AG04449 (cell line): ENCODE measurements at regions of chr17 and their contacts with region 1.

Region 1: DNA sequence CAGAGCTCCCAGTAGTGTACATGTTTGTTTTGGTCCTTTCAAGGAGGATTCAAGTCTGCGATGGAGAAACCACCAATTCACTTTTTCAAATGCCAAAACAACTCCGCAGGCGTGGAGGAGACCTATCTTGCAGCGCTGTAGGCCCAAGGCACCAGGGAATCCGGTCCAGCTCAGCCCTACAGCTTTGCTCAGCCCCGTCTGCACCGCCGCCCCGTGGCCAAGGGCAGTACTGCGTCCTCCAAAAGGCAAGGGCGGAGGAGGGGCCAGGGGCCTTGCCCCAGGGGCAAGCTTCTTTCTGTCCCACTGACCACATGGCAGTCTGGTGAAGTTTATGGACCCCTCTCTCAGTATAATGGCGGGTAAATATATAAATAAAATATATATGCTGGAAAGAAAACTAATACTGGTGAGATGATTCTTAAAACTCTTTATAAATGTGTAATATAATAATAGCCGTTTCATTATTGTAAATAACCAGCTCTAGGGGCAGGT is 709 bp upstream of the CD300LG start:
- DNase-seq: peak; percentile 3
- H3K4me3 ChIP-seq: no peak overlapping the region
- CTCF ChIP-seq: peak; percentile 100

Region 2: GRCh38 chr17:43760254-43760852 is 85.9 kb before region 1 on chr17:
- CTCF ChIA-PET with region 1: interaction called, 35 read pairs
- POLR2A ChIA-PET with region 1: no interaction called
- DNase-seq: peak; percentile 65
- H3K4me3 ChIP-seq: no peak overlapping the region
- CTCF ChIP-seq: peak; percentile 94

Region 3: DNA sequence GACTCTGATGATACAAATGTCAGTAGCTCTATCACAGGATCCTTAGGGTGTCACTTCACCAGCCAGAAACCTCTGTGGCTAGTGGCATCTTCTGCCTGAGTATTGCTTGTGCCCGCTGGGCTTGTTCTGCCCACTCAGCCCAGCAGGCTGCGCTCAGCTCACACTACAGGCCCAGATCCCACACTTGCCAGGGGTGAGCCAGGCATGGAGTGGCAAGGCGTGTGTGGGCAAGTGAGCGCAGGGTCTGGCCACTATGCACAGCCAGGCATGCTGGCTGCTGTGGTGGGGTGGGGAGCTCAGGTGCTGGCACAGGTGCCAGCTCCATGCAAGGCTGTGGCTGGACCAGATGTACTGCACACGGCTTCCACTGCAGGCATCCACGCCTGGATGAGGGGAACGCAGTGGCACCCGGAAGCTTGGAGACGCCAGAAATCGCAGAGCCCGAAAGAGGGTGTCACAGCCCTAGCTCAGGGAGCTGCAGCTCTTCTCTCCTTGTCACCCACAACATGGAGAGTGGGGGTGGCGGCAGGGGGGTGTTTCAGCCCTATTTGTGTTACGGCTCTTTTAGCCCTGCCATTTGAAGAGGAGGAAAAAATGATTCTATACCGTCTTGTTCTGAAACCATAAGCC is 55.8 kb before region 1 on chr17:
- CTCF ChIA-PET with region 1: interaction called, 15 read pairs
- POLR2A ChIA-PET with region 1: no interaction called
- DNase-seq: no peak
- H3K4me3 ChIP-seq: no peak overlapping the region
- CTCF ChIP-seq: peak; percentile 40

Region 4: GRCh38 chr17:43827590-43827989 is 18.7 kb before region 1 on chr17:
- CTCF ChIA-PET with region 1: interaction called, 22 read pairs
- POLR2A ChIA-PET with region 1: no interaction called
- DNase-seq: no peak
- H3K4me3 ChIP-seq: no peak overlapping the region
- CTCF ChIP-seq: no peak

Region 5: GRCh38 chr17:43861024-43861621 is 14.9 kb after region 1 on chr17:
- CTCF ChIA-PET with region 1: interaction called, 61 read pairs
- POLR2A ChIA-PET with region 1: no interaction called
- DNase-seq: no peak
- H3K4me3 ChIP-seq: no peak overlapping the region
- CTCF ChIP-seq: no peak

Region 6: GRCh38 chr17:43878260-43879175 is 32.3 kb after region 1 on chr17:
- CTCF ChIA-PET with region 1: interaction called, 30 read pairs
- POLR2A ChIA-PET with region 1: no interaction called
- DNase-seq: peak; percentile 65
- H3K4me3 ChIP-seq: no peak overlapping the region
- CTCF ChIP-seq: peak; percentile 100